ENCODE measurements at regions of chr1 and their contacts with region 1.

Region 1: DNA sequence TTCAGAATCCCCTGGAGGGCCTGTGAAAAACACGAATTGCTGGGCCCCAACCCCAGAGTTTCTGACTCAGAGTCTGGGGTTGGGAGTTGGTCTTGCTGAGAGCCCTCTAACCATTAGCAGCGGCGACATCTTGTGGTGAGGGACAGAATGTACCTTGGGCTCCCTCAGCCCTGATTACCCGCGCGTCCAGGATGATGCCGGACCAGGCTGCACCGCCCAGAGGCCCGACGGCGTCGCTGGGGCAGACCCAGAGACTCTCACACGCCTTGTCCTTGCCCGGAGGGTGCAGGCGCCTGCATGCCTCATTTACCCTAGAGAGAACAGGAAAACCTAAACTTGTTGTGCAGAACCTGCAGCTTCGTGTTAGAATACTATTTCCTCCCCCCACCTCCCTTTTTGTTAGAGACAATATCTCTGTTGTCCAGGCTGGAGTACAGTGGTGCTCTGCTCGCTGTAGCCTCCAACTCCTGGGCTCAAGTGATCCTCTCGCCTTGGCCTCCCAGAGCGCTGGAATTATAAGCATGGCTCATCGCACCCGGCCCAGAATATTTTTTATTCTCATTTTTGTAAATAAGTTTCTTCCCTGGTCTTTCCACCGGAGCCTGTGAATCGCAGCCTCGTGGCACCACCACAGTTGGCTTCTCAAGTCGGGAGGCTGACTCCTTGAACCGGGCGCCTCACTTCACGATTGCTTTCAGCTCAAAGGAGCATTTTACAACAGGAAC is 22.2 kb upstream of the RD3 start:
- DNase-seq: peak; percentile 91
- H3K4me3 ChIP-seq: no peak overlapping the region
- H3K27ac ChIP-seq: no peak overlapping the region
- H3K4me1 ChIP-seq: peaks cover 0 to 18% (median 13%) of the 10 kb centered on the region in 4 donors
- H3K27me3 ChIP-seq: no peaks in the 10 kb centered on the region
- CTCF ChIP-seq: peak; percentile 32 to 83 (median 66)
- EP300 ChIP-seq: no peak
- POLR2A ChIP-seq: no peak

Region 2: GRCh38 chr1:211382714-211383480 is 131.3 kb before region 1 on chr1:
- intact Hi-C with region 1: loop called (anchors 5 kb)
- DNase-seq: peak; percentile 96
- H3K4me3 ChIP-seq: peak overlapping the region; percentile 52 to 73 (median 64)
- H3K27ac ChIP-seq: peak overlapping the region; percentile 83 to 97 (median 90)
- H3K4me1 ChIP-seq: peaks cover 0 to 6% (median 0%) of the 10 kb centered on the region in 4 donors
- H3K27me3 ChIP-seq: no peaks in the 10 kb centered on the region
- CTCF ChIP-seq: no peak
- EP300 ChIP-seq: no peak
- POLR2A ChIP-seq: peak; percentile 82 to 95

Region 3: DNA sequence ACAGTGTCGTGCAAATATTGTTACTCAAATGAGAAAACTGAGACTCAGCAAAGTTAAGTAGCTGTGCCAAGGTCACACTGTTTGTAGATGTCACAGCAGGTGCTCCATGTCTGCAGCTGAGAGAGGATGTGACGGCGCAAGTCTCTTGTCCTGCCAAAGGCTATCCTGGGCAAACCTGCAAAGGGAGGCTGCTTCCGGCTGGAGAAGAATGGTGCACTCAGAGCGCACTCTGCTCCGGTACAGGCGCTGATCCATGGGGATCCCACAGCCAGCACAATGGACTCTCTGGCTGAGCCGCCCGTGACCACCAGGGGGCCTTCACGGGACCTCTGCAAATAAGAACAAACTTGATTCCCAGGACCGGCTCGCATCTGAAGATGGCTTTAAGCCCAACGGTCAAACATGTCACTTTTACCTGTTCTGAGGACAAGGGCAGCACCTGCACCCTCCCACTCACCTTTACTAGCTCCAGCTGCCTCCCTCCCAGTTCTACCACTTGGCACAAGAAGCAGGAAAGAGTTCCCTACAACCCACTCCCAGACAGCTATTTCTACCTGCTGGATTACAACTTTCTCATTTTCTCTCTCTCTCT is 44.2 kb before region 1 on chr1:
- intact Hi-C with region 1: loop called (anchors 1 kb)
- DNase-seq: peak; percentile 89
- H3K4me3 ChIP-seq: no peak overlapping the region
- H3K27ac ChIP-seq: no peak overlapping the region
- H3K4me1 ChIP-seq: peaks cover 0 to 19% (median 16%) of the 10 kb centered on the region in 4 donors
- H3K27me3 ChIP-seq: peaks cover 0 to 13% (median 5%) of the 10 kb centered on the region in 3 donors
- CTCF ChIP-seq: peak; percentile 50 to 84 (median 70)
- EP300 ChIP-seq: no peak
- POLR2A ChIP-seq: no peak

Region 4: GRCh38 chr1:211654838-211655787 is 140.9 kb after region 1 on chr1:
- intact Hi-C with region 1: loop called (anchors 1 kb)
- DNase-seq: peak; percentile 94
- H3K4me3 ChIP-seq: peak overlapping the region in 1 of 4 donors; percentile 4
- H3K27ac ChIP-seq: no peak overlapping the region
- H3K4me1 ChIP-seq: peaks cover 0 to 4% (median 0%) of the 10 kb centered on the region in 4 donors
- H3K27me3 ChIP-seq: no peaks in the 10 kb centered on the region
- CTCF ChIP-seq: peak; percentile 87 to 92 (median 88)
- EP300 ChIP-seq: no peak
- POLR2A ChIP-seq: no peak

Region 5: GRCh38 chr1:211811848-211812247 is 297.7 kb after region 1 on chr1:
- intact Hi-C with region 1: no loop called
- DNase-seq: no peak
- H3K4me3 ChIP-seq: no peak overlapping the region
- H3K27ac ChIP-seq: no peak overlapping the region
- H3K4me1 ChIP-seq: peaks cover 0 to 18% (median 10%) of the 10 kb centered on the region in 4 donors
- H3K27me3 ChIP-seq: no peaks in the 10 kb centered on the region
- CTCF ChIP-seq: no peak
- EP300 ChIP-seq: no peak
- POLR2A ChIP-seq: no peak

Measured in sigmoid colon (tissue), 7 donors.